HepG2 (cell line): ENCODE measurements at regions of chr11 and their contacts with region 1.

Region 1: GRCh38 chr11:85595285-85595884 is 31.8 kb downstream of the DLG2 start:
- DNase-seq: peak; percentile 38
- ATAC-seq: peak; percentile 38; the same call in 1 of the 3 replicates
- H3K4me3 ChIP-seq: no peak overlapping the region
- H3K27ac ChIP-seq: no peak overlapping the region
- H3K4me1 ChIP-seq: no peaks in the 10 kb centered on the region
- H3K27me3 ChIP-seq: no peaks in the 10 kb centered on the region
- CTCF ChIP-seq: peak; percentile 67
- EP300 ChIP-seq: no peak
- POLR2A ChIP-seq: no peak
- RAD21 ChIP-seq: peak; percentile 32; the same call in 1 of the 2 replicates

Region 2: DNA sequence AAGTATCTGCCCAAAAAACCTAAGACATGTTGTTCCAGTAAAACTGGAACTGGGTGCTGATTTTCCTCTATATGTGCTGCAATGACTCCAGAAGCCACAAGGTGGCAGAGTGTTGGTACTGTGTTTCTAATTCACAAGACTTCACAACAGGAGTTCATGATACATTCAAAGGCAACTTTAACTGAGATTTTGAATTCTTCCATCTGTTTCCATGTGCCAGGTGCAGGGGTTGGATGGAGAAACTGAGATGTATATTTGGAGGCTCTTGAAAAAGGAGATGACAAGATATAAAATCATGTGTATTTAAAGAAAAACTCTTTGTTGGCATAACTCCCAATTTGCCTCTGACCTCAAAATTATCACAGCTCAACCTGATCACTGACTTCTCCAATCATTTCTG is 1210.7 kb before region 1 on chr11:
- CTCF ChIA-PET with region 1: no interaction called
- POLR2A ChIA-PET with region 1: no interaction called
- in situ Hi-C with region 1: no loop called
- intact Hi-C with region 1: loop called (anchors 10 kb)
- DNase-seq: peak; percentile 30
- ATAC-seq: no peak
- H3K4me3 ChIP-seq: no peak overlapping the region
- H3K27ac ChIP-seq: no peak overlapping the region
- H3K4me1 ChIP-seq: no peaks in the 10 kb centered on the region
- H3K27me3 ChIP-seq: no peaks in the 10 kb centered on the region
- CTCF ChIP-seq: peak; percentile 62
- EP300 ChIP-seq: no peak
- POLR2A ChIP-seq: no peak
- RAD21 ChIP-seq: no peak

Region 3: GRCh38 chr11:84780689-84781293 is 814.6 kb before region 1 on chr11:
- CTCF ChIA-PET with region 1: no interaction called
- POLR2A ChIA-PET with region 1: no interaction called
- in situ Hi-C with region 1: loop called (anchors 25 kb)
- intact Hi-C with region 1: no loop called
- DNase-seq: peak; percentile 6
- ATAC-seq: peak; percentile 41; the same call in 1 of the 3 replicates
- H3K4me3 ChIP-seq: no peak overlapping the region
- H3K27ac ChIP-seq: no peak overlapping the region
- H3K4me1 ChIP-seq: no peaks in the 10 kb centered on the region
- H3K27me3 ChIP-seq: no peaks in the 10 kb centered on the region
- CTCF ChIP-seq: peak; percentile 36; the same call in 1 of the 2 replicates
- EP300 ChIP-seq: no peak
- POLR2A ChIP-seq: no peak
- RAD21 ChIP-seq: no peak

Region 4: DNA sequence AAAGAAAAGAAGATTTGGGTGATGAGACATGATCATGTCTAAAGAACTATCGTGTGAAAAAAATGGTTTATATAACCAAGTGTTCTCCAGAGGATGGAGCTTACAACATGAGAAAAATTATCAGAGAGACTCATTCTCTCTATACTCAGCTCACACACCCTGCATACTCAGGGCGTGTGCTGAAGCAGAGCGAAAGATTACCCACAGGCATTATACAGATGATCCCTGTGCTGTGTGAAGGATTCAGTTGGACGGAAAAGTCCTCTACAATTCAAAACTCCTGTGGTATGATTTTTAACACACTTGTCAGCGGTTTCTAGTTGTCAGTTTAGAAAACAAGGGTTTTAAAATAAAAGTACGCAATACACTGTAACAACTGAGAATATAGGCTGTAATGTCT is 235.5 kb before region 1 on chr11:
- CTCF ChIA-PET with region 1: no interaction called
- POLR2A ChIA-PET with region 1: no interaction called
- in situ Hi-C with region 1: no loop called
- intact Hi-C with region 1: no loop called
- DNase-seq: no peak
- ATAC-seq: no peak
- H3K4me3 ChIP-seq: no peak overlapping the region
- H3K27ac ChIP-seq: no peak overlapping the region
- H3K4me1 ChIP-seq: no peaks in the 10 kb centered on the region
- H3K27me3 ChIP-seq: no peaks in the 10 kb centered on the region
- CTCF ChIP-seq: no peak
- EP300 ChIP-seq: no peak
- POLR2A ChIP-seq: no peak
- RAD21 ChIP-seq: no peak

Region 5: GRCh38 chr11:85664615-85665481 is 69.5 kb after region 1 on chr11 and contains the start of gene CREBZF:
- CTCF ChIA-PET with region 1: no interaction called
- POLR2A ChIA-PET with region 1: no interaction called
- in situ Hi-C with region 1: no loop called
- intact Hi-C with region 1: loop called (anchors 1 kb)
- DNase-seq: peak; percentile 85
- ATAC-seq: peak; percentile 94
- H3K4me3 ChIP-seq: peak within 1 kb of the TSS; percentile 72 to 95 (median 86)
- H3K27ac ChIP-seq: peak within 1 kb of the TSS; percentile 98
- H3K4me1 ChIP-seq: peaks cover 40% of the 10 kb centered on the region
- H3K27me3 ChIP-seq: no peaks in the 10 kb centered on the region; a peak in 1 of 5 replicates
- CTCF ChIP-seq: peak; percentile 33; the same call in 1 of the 2 replicates
- EP300 ChIP-seq: no peak
- POLR2A ChIP-seq: peak; percentile 95 to 96
- RAD21 ChIP-seq: no peak; the same call in 1 of the 2 replicates
- total RNA-seq, gene CREBZF: 17.2 and 43.1 TPM in 2 replicates

Region 6: GRCh38 chr11:86218125-86219084 is 623.0 kb after region 1 on chr11:
- CTCF ChIA-PET with region 1: no interaction called
- POLR2A ChIA-PET with region 1: no interaction called
- in situ Hi-C with region 1: no loop called
- intact Hi-C with region 1: loop called (anchors 10 kb)
- DNase-seq: peak; percentile 64
- ATAC-seq: peak; percentile 96
- H3K4me3 ChIP-seq: peak overlapping the region in 2 of 3 experiments; percentile 24 to 31; a peak in 4 of 6 replicates
- H3K27ac ChIP-seq: no peak overlapping the region
- H3K4me1 ChIP-seq: peaks cover 13% of the 10 kb centered on the region
- H3K27me3 ChIP-seq: no peaks in the 10 kb centered on the region; a peak in 2 of 5 replicates
- CTCF ChIP-seq: peak; percentile 83
- EP300 ChIP-seq: no peak
- POLR2A ChIP-seq: no peak
- RAD21 ChIP-seq: peak; percentile 77